Dorsolateral prefrontal cortex (tissue), 120 donors: ENCODE measurements at regions of chr10 and their contacts with region 1.

Region 1: DNA sequence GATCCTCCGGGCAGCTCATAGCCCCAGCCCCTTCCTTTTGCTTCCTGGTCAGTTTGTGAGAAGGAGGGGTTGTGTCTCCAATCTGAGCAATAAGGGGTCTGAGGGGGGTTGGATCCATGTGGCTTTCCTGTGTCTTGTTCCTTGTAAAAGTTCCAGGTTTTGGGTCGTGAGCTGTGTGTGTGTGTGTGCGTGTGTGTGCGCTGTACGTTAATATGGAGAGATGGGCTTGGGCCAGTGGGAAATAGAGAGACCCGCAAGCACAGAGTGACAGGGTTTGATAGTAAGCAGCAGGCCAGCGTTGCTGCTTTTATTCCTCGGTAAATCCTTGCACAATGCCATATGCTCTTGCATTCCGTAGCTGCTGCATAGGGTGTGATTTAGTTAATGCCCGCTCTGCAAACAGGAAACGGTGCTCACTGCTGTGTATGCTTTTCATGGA is 108.5 kb downstream of the TCF7L2 start:
- DNase-seq: no peak
- H3K4me3 ChIP-seq: peak overlapping the region in 53 of 59 donors; percentile 0 to 63 (median 41)
- H3K27ac ChIP-seq: peak overlapping the region in 52 of 59 donors; percentile 23 to 91 (median 84)
- H3K27me3 ChIP-seq: no peaks in the 10 kb centered on the region
- CTCF ChIP-seq: no peak

Region 2: DNA sequence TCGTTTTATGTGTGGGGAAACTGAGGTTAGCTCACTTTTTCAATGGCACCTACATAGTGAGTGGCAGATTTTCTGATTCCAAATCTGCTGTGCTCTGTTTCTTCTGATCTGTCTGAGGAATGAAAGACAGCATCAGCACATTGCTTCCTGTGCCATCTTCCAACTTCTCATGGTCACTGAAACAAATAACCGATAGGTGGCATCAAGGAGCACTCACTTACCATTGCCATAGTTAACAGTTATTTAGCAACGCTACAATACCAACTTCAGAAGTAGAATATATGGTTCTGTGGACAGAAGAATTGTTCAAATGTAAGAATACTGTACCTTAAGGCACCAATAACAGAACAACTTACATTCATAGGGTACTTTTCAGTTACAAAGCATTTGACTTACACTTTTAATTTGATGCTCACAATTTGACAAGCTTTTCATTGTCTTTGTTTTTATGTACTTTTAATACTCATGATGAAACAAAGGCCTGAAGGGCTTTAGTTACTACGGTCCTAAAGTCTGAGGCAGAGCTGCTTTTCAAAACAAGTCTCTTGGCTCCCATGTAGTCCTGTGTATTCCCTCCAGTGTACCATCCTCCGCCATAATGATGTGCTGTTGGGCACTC is 337.4 kb before region 1 on chr10:
- intact Hi-C with region 1: loop called in 1 of 2 experiments (anchors 5 kb)
- DNase-seq: no peak
- H3K4me3 ChIP-seq: no peak overlapping the region
- H3K27ac ChIP-seq: no peak overlapping the region
- H3K27me3 ChIP-seq: no peaks in the 10 kb centered on the region
- CTCF ChIP-seq: peak in 55 of 56 donors; percentile 32 to 82 (median 65)

Region 3: DNA sequence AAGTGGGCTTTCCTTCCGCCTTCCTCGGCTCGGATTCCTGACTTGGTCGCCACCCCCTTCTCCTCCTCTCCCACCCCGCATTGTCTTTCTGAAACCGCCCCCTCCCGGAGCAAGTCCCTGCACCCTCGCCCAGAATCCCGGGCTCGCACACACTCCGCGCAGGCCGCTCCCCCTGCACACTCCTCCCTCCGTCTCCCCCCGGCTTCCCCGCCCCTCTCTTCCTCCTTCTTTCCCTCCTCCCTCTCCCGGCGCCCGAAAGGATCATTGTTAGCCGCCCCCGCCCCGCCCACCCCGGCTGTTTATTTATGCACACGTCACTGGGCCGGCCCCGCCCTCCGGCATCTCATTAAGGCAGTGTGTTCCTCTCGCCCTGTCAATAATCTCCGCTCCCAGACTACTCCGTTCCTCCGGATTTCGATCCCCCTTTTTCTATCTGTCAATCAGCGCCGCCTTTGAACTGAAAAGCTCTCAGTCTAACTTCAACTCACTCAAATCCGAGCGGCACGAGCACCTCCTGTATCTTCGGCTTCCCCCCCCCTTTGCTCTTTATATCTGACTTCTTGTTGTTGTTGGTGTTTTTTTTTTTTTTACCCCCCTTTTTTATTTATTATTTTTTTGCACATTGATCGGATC is 108.6 kb before region 1 on chr10 and contains the start of gene TCF7L2:
- intact Hi-C with region 1: loop called (anchors 2 kb)
- DNase-seq: peak; percentile 38 to 95 (median 91)
- H3K4me3 ChIP-seq: peak within 1 kb of the TSS; percentile 26 to 86 (median 73)
- H3K27ac ChIP-seq: peak within 1 kb of the TSS in 55 of 59 donors; percentile 23 to 92 (median 76)
- H3K27me3 ChIP-seq: no peaks in the 10 kb centered on the region
- CTCF ChIP-seq: no peak
- total RNA-seq, gene TCF7L2: 15.8 to 51.9 (median 27.4) TPM

Region 4: DNA sequence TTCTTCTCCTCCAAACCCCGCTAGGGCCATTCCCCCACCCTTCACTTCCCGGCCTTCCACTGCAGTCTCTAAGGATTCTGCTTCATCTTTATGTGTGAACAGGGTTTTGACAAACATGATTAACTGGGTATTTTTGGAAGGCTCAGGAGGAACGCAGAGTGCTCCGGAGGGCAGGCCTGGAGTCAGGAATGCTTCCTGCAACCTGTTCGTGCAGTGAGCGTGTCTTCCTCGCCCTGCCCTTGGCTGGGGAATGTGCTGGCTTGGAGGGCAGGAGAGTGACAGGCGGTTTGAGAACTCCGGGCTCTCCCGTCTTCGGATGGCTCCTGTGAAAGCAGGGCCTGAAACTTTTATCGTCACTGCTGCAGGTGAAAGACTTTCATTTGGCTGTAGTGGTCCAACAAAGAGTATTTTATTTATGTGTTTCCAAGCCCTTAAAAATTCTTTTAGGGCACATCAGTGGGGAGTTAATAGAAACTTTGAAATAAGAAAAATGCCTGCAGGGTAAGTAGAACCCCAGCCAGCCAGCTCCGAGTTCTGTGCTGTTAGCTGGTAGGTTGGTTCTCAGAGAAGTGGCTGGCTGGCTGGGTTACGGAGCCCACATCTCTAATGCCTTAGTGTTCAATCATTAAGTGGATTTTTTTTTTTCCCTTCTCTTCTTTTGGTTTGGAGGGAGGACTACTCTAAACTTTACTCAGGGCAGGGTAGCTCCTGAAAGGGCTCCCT is 57.5 kb before region 1 on chr10:
- intact Hi-C with region 1: loop called in 1 of 2 experiments (anchors 2 kb)
- DNase-seq: no peak
- H3K4me3 ChIP-seq: no peak overlapping the region
- H3K27ac ChIP-seq: peak overlapping the region in 35 of 59 donors; percentile 1 to 94 (median 44)
- H3K27me3 ChIP-seq: no peaks in the 10 kb centered on the region
- CTCF ChIP-seq: no peak

Region 5: DNA sequence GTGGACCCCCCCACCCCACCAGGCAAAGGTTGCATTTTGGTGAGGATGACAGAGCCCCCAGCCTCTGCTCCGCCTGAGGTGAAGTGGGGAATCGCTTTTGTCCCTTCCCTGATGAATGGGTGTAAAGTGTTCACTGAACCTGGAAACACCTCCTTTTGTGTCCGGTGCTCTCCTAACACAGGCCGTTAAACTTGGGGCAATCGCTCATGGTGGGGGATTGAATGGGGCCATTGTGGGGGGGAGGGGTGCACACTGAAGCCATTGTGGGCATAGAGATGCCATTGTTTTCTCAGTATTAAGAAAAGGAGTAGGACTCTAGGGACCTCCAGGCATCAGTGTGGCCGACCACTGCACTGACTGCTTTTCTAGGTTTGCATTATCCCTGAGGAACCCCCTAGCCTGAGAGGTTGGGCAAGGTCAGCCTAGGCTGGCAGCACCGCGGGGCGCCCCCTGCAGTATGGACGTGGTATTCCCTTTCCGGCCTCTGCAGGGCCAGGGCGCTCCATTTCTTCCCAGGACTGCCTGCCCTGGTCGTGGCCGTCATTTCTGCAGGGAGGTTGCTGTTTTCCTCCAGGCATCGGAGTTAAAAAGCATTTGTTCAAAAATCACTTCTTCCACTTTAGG is 49.8 kb after region 1 on chr10:
- intact Hi-C with region 1: loop called in 1 of 2 experiments (anchors 5 kb)
- DNase-seq: peak in 4 of 10 donors; percentile 25 to 67 (median 48)
- H3K4me3 ChIP-seq: no peak overlapping the region
- H3K27ac ChIP-seq: no peak overlapping the region
- H3K27me3 ChIP-seq: no peaks in the 10 kb centered on the region
- CTCF ChIP-seq: peak; percentile 13 to 79 (median 61)